CD8-positive, alpha-beta memory T cell (primary cell): ENCODE measurements at regions of chr2 and their contacts with region 1.

Region 1: DNA sequence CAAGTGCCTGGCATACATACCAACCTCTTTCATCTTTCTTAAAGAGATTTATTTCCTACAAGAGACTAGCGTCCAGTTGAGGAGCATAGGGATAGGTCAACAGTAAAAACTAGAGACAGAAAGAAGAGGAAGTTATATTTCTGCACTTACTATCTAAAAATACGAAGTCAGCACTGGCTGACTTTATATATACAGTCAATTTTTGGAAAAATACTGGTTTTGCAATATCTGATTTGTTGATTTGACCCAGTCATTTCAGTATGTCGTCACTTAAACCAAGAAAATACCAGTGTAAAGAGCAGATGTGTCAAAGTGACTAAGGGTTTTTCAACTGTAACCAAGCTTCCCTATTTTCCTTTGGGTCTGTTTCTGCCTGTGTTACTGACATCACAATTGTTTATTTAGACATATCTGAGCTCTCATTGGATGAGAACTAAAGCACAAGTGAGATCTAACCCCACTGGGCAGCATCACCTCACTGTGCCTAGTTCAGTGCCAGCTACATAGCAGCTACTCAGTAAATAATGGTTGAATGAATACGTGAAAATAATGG is 23.0 kb downstream of the CYTIP start:
- DNase-seq: no peak
- H3K4me3 ChIP-seq: no peak overlapping the region
- H3K4me3 Mint-ChIP-seq: peak overlapping the region; percentile 27 to 65 (median 54)
- H3K27ac ChIP-seq: no peak overlapping the region
- H3K27ac Mint-ChIP-seq: peak overlapping the region; percentile 83 to 97 (median 91)
- H3K4me1 ChIP-seq: peaks cover 65% of the 10 kb centered on the region
- H3K4me1 Mint-ChIP-seq: peaks cover 74 to 88% (median 88%) of the 10 kb centered on the region in 3 donors
- H3K27me3 ChIP-seq: no peaks in the 10 kb centered on the region
- H3K27me3 Mint-ChIP-seq: peaks cover 0 to 1% of the 10 kb centered on the region in 2 donors

Region 2: GRCh38 chr2:157404363-157404762 is 16.5 kb before region 1 on chr2:
- CTCF ChIA-PET with region 1: interaction called, 11 read pairs
- POLR2A ChIA-PET with region 1: interaction called, 15 read pairs
- DNase-seq: peak; percentile 42 to 89 (median 82)
- H3K4me3 ChIP-seq: peak overlapping the region; percentile 35
- H3K4me3 Mint-ChIP-seq: peak overlapping the region; percentile 30 to 77 (median 53)
- H3K27ac ChIP-seq: peak overlapping the region; percentile 71
- H3K27ac Mint-ChIP-seq: peak overlapping the region; percentile 94 to 99 (median 98)
- H3K4me1 ChIP-seq: peaks cover 52% of the 10 kb centered on the region
- H3K4me1 Mint-ChIP-seq: peaks cover 69 to 80% (median 78%) of the 10 kb centered on the region in 3 donors
- H3K27me3 ChIP-seq: no peaks in the 10 kb centered on the region
- H3K27me3 Mint-ChIP-seq: no peaks in the 10 kb centered on the region

Region 3: GRCh38 chr2:157433394-157433793 is 12.5 kb after region 1 on chr2:
- CTCF ChIA-PET with region 1: interaction called, 28 read pairs
- POLR2A ChIA-PET with region 1: interaction called, 45 read pairs
- DNase-seq: no peak
- H3K4me3 ChIP-seq: peak overlapping the region; percentile 58
- H3K4me3 Mint-ChIP-seq: peak overlapping the region; percentile 71 to 99 (median 96)
- H3K27ac ChIP-seq: no peak overlapping the region
- H3K27ac Mint-ChIP-seq: peak overlapping the region; percentile 72 to 99 (median 92)
- H3K4me1 ChIP-seq: peaks cover 66% of the 10 kb centered on the region
- H3K4me1 Mint-ChIP-seq: peaks cover 86 to 97% (median 88%) of the 10 kb centered on the region in 3 donors
- H3K27me3 ChIP-seq: no peaks in the 10 kb centered on the region
- H3K27me3 Mint-ChIP-seq: no peaks in the 10 kb centered on the region